Activated naive CD4-positive, alpha-beta T cell treated with anti-CD3 and anti-CD28 coated beads, Interleukin-2, amount 10 ng/mL, durations not matched to agents 7 days and 5 days (primary cell): ENCODE measurements at regions of chr5 and their contacts with region 1.

Region 1: DNA sequence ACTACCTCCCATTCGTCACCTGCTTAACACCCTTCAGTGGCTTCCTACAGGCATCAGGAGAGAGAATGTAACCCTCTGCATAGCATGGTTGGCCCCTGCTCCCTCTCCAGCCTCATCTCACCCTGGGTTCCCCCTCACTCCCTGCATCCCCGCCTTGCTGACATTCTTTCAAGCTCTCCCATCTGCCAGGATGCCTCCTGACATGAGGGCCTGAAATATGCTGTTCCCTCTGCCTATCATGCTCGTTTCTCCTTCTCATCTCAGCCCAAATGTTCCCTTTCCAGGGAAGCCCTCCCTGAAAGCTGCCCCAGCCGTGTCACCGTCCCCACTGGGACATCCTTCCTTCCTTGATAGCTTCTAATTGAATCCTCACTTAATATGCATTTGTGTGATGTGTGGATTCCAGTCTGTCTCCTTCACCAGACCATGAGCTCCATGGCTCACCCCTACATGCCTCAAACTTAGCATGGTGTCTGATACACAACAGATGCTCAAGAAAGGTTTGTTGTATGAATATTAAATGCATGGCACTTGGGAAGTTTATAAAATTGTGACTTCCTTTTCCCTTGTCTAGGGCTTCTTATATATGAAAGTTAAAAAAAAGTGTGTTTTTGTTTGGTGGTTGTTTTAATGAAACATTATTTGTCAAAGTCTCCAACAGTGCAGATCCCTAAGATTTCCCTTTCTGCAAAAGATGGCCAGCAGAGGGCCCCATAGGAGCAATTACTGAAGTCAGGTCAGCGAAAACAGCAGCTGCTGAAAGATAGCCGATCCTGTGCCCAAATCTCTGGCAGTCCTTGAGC is 7.3 kb upstream of the C5orf58 start:
- DNase-seq: peak; percentile 87
- H3K4me3 Mint-ChIP-seq: no peak overlapping the region
- H3K27ac Mint-ChIP-seq: no peak overlapping the region
- H3K4me1 Mint-ChIP-seq: peaks cover 4% of the 10 kb centered on the region
- H3K27me3 Mint-ChIP-seq: peaks cover 4% of the 10 kb centered on the region

Region 2: DNA sequence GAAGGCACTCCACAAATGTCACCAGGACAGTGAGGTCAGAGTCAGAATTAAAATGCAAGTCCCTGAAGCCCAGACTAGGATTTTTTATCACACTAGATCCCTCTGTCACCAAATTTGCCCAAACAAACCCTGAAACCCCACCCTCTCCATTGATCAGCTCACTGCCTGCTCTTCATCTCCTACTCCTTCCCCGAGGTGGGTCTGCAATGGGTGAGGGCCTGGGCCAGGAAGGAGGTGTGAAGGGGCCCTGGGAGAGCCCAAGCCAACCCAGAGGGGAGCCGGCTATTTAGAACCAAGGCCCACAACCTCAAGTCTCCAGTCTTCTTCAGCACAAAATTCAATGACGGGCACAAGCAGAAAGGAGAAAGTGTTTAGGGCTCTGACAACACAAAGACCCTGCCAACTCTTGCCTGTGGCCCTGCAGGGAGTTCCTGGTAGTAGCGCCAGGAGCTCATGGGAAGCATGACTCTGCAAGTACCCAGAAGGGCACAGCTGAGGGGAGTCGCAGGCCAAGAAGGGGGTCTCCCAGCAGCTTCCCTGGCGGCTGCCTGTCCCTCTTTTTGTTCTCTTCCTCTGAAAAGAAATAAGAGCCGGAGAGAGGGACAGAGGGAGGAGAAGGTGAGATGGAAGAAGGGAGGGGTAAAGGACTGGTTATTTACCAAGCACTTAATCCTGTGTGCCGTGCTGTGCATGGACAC is 114.3 kb before region 1 on chr5:
- CTCF ChIA-PET with region 1: no interaction called
- DNase-seq: no peak
- H3K4me3 Mint-ChIP-seq: no peak overlapping the region
- H3K27ac Mint-ChIP-seq: no peak overlapping the region
- H3K4me1 Mint-ChIP-seq: no peaks in the 10 kb centered on the region
- H3K27me3 Mint-ChIP-seq: peaks cover 37% of the 10 kb centered on the region

Region 3: GRCh38 chr5:170278611-170279452 is 53.3 kb after region 1 on chr5:
- CTCF ChIA-PET with region 1: interaction called, 15 read pairs
- DNase-seq: peak; percentile 93
- H3K4me3 Mint-ChIP-seq: peak overlapping the region; percentile 66
- H3K27ac Mint-ChIP-seq: peak overlapping the region; percentile 97
- H3K4me1 Mint-ChIP-seq: peaks cover 97% of the 10 kb centered on the region
- H3K27me3 Mint-ChIP-seq: no peaks in the 10 kb centered on the region

Region 4: DNA sequence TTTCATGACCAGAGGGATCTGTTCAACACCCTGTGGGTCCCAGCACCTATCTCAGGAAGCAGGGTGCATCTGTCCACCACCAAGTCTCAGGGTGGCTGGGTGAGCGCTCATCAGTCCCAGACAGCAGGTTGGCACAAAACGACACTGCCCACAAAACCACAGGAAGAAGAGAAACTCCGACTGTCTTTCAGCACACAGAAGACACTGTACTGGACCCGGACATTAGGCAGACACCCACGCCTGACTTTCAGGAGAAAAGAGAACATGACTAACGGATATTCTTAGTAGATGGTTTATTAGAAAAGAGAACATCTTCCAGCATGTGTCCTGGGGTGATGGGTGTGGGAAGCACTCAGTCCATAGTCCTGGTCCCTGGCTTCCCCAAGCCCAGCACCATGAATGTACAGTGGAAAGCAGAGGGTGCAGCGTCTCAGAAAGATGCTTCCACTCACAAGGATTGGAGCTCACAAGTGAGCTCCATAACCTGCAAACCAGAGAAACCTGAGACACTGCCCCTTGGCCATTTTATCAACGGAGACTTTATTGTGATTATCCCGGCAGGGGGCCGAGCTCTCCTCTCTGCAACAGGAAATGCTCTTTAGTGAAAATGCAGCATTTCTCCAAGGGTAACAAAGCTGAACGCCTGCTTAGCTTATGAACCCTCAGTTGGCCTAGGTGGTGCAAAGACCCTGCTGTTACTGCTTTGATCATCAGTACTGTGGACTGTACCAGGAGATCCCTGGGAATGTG is 107.8 kb after region 1 on chr5:
- CTCF ChIA-PET with region 1: interaction called, 218 read pairs
- DNase-seq: peak; percentile 73
- H3K4me3 Mint-ChIP-seq: peak overlapping the region; percentile 60
- H3K27ac Mint-ChIP-seq: peak overlapping the region; percentile 89
- H3K4me1 Mint-ChIP-seq: peaks cover 28% of the 10 kb centered on the region
- H3K27me3 Mint-ChIP-seq: peaks cover 5% of the 10 kb centered on the region

Region 5: DNA sequence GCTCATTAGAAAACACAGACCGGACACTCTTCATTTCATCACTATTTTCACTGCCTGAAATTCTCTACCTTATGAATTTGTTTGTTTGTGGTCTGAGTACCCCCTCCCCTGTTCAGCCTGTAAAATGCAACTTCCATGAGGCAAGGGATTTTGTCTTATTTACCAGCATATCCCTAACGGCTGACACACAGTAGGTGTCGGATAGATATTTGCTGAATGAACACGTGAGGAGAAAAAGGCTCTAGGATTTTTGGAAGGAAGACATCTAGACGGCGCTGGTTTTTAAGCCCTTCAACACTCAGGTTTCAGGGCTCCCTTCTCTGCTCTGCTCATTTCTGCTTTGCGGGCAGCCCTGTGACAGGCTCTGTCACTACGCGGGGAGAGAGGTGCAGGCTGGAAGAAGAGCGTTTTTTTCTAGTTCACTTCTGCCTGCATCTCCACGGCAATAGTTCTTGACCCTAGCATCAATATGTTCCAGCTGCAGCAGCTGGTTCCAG is 122.7 kb after region 1 on chr5:
- CTCF ChIA-PET with region 1: interaction called, 218 read pairs
- DNase-seq: no peak
- H3K4me3 Mint-ChIP-seq: no peak overlapping the region
- H3K27ac Mint-ChIP-seq: no peak overlapping the region
- H3K4me1 Mint-ChIP-seq: peaks cover 3% of the 10 kb centered on the region
- H3K27me3 Mint-ChIP-seq: peaks cover 74% of the 10 kb centered on the region